PC-9 (cell line): ENCODE measurements at regions of chr1 and their contacts with region 1.

Region 1: DNA sequence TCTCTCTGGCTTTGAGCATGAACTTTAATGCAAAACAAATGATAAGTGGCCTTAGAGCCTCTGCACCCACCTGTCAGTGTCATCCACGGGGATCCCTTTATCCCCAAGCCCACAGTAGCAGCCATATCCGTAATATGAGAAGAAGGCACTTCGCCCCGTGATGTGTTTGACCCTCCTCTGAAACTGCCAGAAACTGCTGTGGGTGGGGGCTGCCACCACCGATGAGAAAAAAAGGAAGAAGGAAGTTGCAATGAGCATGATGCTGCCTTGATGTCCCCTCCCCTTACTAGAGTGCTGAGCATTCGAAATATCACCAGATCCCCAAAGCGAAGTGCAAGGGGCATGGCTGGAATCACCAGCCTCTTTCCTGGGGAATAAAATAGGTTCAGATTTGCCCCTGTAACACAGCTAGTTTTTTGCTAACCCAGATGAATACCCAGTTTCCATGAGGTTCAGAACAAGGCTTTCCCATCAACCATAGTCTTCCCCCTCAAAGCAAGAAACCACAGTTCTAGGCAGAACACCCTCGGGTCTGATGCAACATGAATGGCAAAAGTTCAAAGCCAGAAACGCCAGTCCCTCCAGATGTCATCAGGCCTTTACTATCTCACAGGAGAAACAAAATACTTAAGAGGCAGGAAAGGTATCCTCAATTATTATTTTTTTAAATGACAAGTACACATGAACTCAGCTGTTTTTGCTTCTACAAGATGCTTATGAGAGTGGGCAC is 10.8 kb upstream of the UBXN10 start:
- DNase-seq: no peak
- H3K4me3 ChIP-seq: no peak overlapping the region
- H3K27ac ChIP-seq: no peak overlapping the region
- H3K4me1 ChIP-seq: peaks cover 16% of the 10 kb centered on the region
- H3K27me3 ChIP-seq: no peaks in the 10 kb centered on the region
- CTCF ChIP-seq: no peak

Region 2: DNA sequence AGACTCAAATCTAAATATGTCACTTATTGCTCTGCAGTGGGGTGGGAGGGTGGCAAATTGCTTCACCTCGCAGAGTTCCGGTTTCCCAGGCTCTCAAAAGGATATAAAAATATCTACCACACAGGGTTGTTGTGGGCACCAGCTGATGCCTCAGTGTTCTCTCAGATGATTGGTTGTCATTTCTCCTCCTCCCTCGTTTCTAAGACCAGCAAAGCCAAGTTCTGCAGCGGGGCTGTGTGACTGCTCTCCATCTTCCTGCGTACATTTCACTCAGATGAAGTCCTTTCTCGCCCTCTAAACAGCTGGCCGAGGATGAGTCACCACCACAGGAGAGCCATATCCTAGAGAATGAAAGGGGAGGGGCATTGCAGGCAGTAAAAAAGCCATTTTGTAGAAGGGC is 80.6 kb after region 1 on chr1:
- CTCF ChIA-PET with region 1: interaction called, 14 read pairs
- POLR2A ChIA-PET with region 1: no interaction called
- intact Hi-C with region 1: no loop called
- DNase-seq: peak in 1 of 2 experiments; percentile 31
- H3K4me3 ChIP-seq: no peak overlapping the region
- H3K27ac ChIP-seq: no peak overlapping the region
- H3K4me1 ChIP-seq: peaks cover 13% of the 10 kb centered on the region
- H3K27me3 ChIP-seq: no peaks in the 10 kb centered on the region
- CTCF ChIP-seq: no peak